ENCODE measurements at regions of chr4 and their contacts with region 1.

Region 1: DNA sequence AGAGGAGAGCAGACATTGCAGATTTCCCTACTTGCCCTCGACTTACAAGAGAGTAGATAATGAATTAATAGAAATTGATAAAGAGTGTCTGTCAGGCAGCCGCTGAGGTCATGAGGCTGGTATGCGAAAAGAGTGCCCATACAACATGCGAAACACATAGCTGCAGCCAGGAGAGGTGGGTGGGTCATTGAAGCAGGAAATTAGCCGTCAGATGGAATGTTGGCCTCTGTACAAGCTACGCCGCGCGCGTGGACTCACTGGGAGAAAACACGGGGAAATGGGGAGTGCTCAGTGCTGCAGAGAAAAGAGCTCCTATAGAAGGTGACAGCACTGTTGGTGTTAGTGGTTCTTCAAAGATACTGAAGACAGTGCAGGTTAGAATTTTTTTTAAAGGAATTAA is 125.1 kb downstream of the RAPGEF2 start:
- DNase-seq: peak; percentile 91
- H3K4me3 ChIP-seq: peak overlapping the region in 1 of 3 experiments; percentile 35
- H3K27ac ChIP-seq: peak overlapping the region; percentile 84
- H3K4me1 ChIP-seq: peaks cover 22% of the 10 kb centered on the region
- H3K27me3 ChIP-seq: no peaks in the 10 kb centered on the region
- CTCF ChIP-seq: peak in 1 of 2 donors; percentile 10
- POLR2A ChIP-seq: peak; percentile 34

Region 2: GRCh38 chr4:159077702-159078495 is 150.1 kb before region 1 on chr4:
- CTCF ChIA-PET with region 1: no interaction called
- POLR2A ChIA-PET with region 1: no interaction called
- dilution Hi-C with region 1: no loop called
- intact Hi-C with region 1: no loop called
- DNase-seq: no peak
- H3K4me3 ChIP-seq: no peak overlapping the region
- H3K27ac ChIP-seq: no peak overlapping the region
- H3K4me1 ChIP-seq: no peaks in the 10 kb centered on the region
- H3K27me3 ChIP-seq: no peaks in the 10 kb centered on the region
- CTCF ChIP-seq: no peak
- POLR2A ChIP-seq: no peak

Region 3: GRCh38 chr4:159206427-159206871 is 21.5 kb before region 1 on chr4:
- CTCF ChIA-PET with region 1: interaction called, 17 read pairs
- POLR2A ChIA-PET with region 1: no interaction called
- dilution Hi-C with region 1: no loop called
- intact Hi-C with region 1: loop called (anchors 2 kb)
- DNase-seq: peak; percentile 73
- H3K4me3 ChIP-seq: no peak overlapping the region
- H3K27ac ChIP-seq: no peak overlapping the region
- H3K4me1 ChIP-seq: peaks cover 27% of the 10 kb centered on the region
- H3K27me3 ChIP-seq: no peaks in the 10 kb centered on the region
- CTCF ChIP-seq: no peak
- POLR2A ChIP-seq: no peak

Region 4: DNA sequence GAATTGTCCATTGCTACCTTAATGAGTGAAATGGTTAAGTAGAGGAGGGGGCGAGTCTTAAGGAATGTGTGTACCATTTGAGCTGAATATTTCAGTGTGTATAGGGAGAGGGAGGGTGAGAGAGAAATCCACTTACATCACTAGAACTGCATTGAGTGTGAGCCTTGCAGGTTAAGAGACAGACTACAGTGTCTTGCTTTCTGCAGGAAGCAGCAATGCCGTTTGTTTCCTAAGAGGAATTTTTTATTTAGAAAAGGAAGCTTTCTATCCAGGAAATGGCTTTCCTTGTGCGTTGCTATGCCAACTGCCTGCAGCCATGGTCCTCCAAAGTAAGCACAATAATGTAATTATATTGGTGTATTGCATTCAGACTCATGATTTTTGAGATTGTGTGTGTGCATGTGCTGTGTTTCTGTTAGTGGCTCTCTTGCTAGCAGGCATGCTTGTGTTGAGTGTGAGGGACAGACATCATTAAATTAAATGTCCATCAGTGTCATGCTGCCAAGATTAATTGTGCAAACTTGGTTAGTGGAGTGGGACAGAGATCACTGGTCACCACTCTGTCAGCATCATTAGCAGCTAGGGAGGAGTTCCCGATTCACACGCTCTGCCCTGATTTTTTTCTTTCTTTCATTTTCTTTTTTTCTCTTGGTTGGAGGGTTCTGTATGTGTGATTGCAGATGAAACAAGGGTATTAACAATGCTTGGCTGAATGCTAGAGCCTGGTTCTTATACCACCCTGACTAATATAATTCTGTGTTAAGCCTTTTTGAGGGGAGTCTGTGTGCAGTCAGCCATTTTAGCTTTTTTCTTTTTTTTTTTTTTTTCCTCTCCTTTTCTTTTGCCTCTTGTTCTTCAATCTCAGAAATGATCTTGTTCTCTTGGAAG is 39.2 kb after region 1 on chr4:
- CTCF ChIA-PET with region 1: interaction called, 14 read pairs
- POLR2A ChIA-PET with region 1: interaction called, 4 read pairs
- dilution Hi-C with region 1: no loop called
- intact Hi-C with region 1: loop called (anchors 2 kb)
- DNase-seq: peak; percentile 83
- H3K4me3 ChIP-seq: no peak overlapping the region
- H3K27ac ChIP-seq: peak overlapping the region; percentile 31
- H3K4me1 ChIP-seq: peaks cover 42% of the 10 kb centered on the region
- H3K27me3 ChIP-seq: no peaks in the 10 kb centered on the region
- CTCF ChIP-seq: no peak
- POLR2A ChIP-seq: no peak

Region 5: DNA sequence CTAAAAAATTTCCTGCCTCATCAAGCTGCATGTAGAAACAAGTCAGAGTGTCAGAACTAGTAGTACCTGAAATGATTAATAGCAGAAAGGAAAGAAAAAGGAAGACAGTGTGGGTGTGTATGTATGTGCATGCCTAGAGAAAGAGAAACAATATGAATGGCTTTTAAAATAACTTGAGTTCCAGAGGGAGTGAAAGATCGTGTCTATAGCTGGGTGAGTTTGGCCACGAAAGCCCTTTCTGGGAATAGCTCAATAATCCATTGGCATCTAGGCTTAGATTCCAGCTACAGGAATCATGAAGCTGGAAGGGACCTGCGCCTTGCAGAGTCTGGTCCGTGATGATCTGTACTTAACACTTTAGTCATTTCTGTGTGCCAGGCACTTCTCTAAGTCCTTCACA is 70.5 kb after region 1 on chr4:
- CTCF ChIA-PET with region 1: no interaction called
- POLR2A ChIA-PET with region 1: no interaction called
- dilution Hi-C with region 1: no loop called
- intact Hi-C with region 1: loop called (anchors 5 kb)
- DNase-seq: peak; percentile 46
- H3K4me3 ChIP-seq: no peak overlapping the region
- H3K27ac ChIP-seq: no peak overlapping the region
- H3K4me1 ChIP-seq: peaks cover 19% of the 10 kb centered on the region
- H3K27me3 ChIP-seq: no peaks in the 10 kb centered on the region
- CTCF ChIP-seq: no peak
- POLR2A ChIP-seq: no peak

Region 6: DNA sequence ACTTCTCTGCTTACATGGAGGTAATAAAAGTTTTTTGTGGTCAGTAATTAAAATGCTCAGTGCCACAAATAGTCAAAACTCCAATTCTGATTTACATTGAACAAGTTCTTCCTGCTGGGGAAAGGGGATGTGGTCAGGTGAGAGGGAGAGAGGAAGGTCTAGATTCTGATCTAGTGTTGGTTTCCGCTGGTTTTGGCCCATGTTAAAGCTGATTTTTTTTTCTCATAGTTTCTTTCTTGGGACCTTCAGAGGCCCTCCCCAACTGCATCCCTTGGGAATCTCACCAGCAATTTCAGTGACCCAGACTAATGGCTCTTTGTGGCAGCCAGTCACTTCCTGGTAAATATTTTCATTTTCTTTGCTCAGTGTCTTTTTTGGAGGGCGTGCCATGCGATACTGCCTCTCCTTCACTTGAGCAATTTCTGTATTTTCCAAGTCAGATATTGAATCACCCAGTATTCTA is 207.6 kb after region 1 on chr4:
- CTCF ChIA-PET with region 1: no interaction called
- POLR2A ChIA-PET with region 1: no interaction called
- dilution Hi-C with region 1: no loop called
- intact Hi-C with region 1: loop called (anchors 5 kb)
- DNase-seq: peak; percentile 70
- H3K4me3 ChIP-seq: no peak overlapping the region
- H3K27ac ChIP-seq: peak overlapping the region; percentile 59
- H3K4me1 ChIP-seq: peaks cover 18% of the 10 kb centered on the region
- H3K27me3 ChIP-seq: no peaks in the 10 kb centered on the region
- CTCF ChIP-seq: no peak
- POLR2A ChIP-seq: no peak

Measured in endothelial cell of umbilical vein (primary cell).